Activated CD4-positive, alpha-beta memory T cell treated with anti-CD3 and anti-CD28 coated beads for 36 hours (primary cell): ENCODE measurements at regions of chr3 and their contacts with region 1.

Region 1: GRCh38 chr3:152151216-152151876 is 117.4 kb upstream of the MBNL1 start:
- DNase-seq: peak; percentile 24
- H3K4me3 Mint-ChIP-seq: no peak overlapping the region
- H3K27ac Mint-ChIP-seq: no peak overlapping the region
- H3K4me1 Mint-ChIP-seq: peaks cover 18% of the 10 kb centered on the region
- H3K27me3 Mint-ChIP-seq: peaks cover 2% of the 10 kb centered on the region

Region 2: DNA sequence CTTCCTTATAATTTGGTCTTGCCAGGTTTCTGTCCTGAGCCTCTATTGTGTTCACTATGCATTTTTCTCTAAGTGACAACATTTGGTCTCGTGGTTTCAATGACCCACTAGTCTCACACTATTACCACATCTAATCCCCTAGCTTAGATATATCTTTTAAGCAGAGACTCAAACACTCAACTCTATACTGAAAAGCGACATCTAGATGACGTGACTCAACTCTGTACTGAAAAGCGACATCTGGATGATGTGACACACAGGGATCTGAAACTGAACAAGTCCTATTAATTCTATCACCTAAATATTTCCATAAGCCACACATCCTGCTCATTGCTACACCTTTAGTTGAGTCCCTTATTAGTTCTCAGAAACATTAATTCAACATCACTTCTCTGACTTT is 24.3 kb before region 1 on chr3:
- CTCF ChIA-PET with region 1: no interaction called
- POLR2A ChIA-PET with region 1: no interaction called
- intact Hi-C with region 1: loop called (anchors 2 kb)
- DNase-seq: peak; percentile 29
- H3K4me3 Mint-ChIP-seq: no peak overlapping the region
- H3K27ac Mint-ChIP-seq: no peak overlapping the region
- H3K4me1 Mint-ChIP-seq: peaks cover 20% of the 10 kb centered on the region
- H3K27me3 Mint-ChIP-seq: no peaks in the 10 kb centered on the region